H1 (cell line): ENCODE measurements at regions of chr15 and their contacts with region 1.

Region 1: GRCh38 chr15:69743091-69743490 is 290.5 kb downstream of the RPLP1 start:
- DNase-seq: no peak
- H3K4me3 ChIP-seq: no peak overlapping the region
- H3K27ac ChIP-seq: no peak overlapping the region
- H3K4me1 ChIP-seq: no peaks in the 10 kb centered on the region
- H3K27me3 ChIP-seq: no peaks in the 10 kb centered on the region
- CTCF ChIP-seq: no peak
- EP300 ChIP-seq: no peak
- POLR2A ChIP-seq: no peak
- RAD21 ChIP-seq: no peak

Region 2: DNA sequence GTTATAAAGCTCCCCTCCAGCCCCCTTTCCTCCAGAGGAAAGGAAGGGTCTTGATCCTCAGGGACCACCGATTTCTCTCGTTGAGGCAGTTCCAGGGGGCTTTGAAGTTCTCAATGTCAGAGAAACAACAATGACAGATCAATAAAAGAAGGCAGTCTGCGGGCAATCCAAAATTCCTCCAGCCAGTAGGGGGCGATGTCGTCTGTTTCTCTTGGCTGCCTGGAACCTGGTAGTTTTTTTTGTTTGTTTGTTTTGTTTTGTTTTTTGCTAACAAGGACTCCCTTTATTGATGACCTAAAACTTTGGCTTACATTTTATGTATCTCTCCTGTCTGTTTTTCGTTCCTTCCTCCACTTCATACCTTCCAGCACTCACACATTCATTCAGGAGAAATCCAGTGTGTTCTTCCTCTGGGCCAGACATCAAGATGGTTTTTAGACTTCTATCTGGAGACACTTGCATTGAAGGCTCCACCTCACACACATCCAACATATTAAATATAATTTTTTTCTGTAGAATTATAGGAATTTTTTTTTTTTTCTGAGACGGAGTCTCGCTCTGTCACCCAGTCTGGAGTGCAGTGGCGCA is 13.8 kb before region 1 on chr15:
- CTCF ChIA-PET with region 1: interaction called, 11 read pairs
- POLR2A ChIA-PET with region 1: interaction called, 3 read pairs
- DNase-seq: peak in 1 of 2 experiments; percentile 88
- H3K4me3 ChIP-seq: no peak overlapping the region
- H3K27ac ChIP-seq: no peak overlapping the region
- H3K4me1 ChIP-seq: peaks cover 2 to 12% (median 7%) of the 10 kb centered on the region in 4 experiments; a peak in 6 of 7 replicates
- H3K27me3 ChIP-seq: no peaks in the 10 kb centered on the region
- CTCF ChIP-seq: peak; percentile 67 to 76 (median 67)
- EP300 ChIP-seq: no peak
- POLR2A ChIP-seq: no peak
- RAD21 ChIP-seq: peak; percentile 79 to 81

Region 3: DNA sequence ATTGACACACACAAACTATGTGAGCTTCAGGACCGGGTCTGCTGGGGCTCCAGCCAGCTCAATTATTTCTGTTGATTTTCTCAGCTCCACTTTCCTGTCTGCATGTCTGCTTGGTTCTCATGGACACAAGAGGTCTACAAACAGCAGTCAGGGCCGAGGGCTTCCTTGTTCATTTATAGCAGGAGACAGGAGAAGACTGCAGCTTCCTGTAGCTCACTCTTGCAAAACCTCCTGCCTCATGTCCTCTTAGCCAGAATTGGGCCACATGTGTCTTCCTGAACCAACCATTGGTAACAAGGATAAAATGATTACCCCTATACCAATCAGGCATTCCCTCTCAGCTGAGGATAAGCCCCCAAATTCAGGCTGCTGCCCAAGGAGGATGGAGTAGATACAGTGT is 171.9 kb after region 1 on chr15:
- CTCF ChIA-PET with region 1: no interaction called
- POLR2A ChIA-PET with region 1: no interaction called
- DNase-seq: no peak
- H3K4me3 ChIP-seq: no peak overlapping the region
- H3K27ac ChIP-seq: no peak overlapping the region
- H3K4me1 ChIP-seq: peaks cover 4 to 21% (median 11%) of the 10 kb centered on the region in 4 experiments
- H3K27me3 ChIP-seq: peaks cover 0 to 5% (median 3%) of the 10 kb centered on the region in 4 experiments; a peak in 3 of 7 replicates
- CTCF ChIP-seq: no peak
- EP300 ChIP-seq: no peak
- POLR2A ChIP-seq: no peak
- RAD21 ChIP-seq: no peak

Region 4: DNA sequence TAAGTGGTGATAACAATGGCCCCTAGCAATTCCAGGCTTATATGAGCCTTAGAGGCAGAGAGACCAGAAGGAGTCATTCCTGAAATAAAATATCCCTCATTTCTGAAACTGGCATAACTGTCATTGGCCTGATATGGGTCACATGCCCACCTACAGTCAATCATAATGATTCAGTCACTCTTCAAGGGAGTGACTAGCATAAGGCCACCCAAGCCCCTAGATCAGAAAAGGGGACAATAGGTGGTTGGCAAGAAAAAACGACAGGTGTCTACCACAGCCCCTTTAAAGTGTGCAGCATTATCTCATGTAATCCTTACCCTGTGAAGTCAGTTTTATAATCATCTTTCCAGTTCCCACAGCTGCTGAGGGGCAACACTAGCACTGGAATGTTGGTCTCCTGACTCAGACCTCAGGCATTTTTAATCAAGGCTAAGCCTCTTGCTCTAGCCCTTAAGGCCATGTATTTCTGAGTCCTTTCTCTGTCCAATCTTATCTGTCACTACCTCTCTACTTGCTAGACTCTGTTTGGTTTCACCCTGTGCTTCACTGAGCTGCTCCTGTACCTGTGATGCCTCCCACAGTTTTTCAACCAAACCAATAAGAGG is 182.8 kb after region 1 on chr15:
- CTCF ChIA-PET with region 1: no interaction called
- POLR2A ChIA-PET with region 1: no interaction called
- DNase-seq: no peak
- H3K4me3 ChIP-seq: no peak overlapping the region
- H3K27ac ChIP-seq: no peak overlapping the region
- H3K4me1 ChIP-seq: peaks cover 0 to 7% (median 1%) of the 10 kb centered on the region in 4 experiments; a peak in 2 of 7 replicates
- H3K27me3 ChIP-seq: no peaks in the 10 kb centered on the region
- CTCF ChIP-seq: no peak
- EP300 ChIP-seq: no peak
- POLR2A ChIP-seq: no peak
- RAD21 ChIP-seq: no peak